Right cardiac atrium (tissue), 5 donors: ENCODE measurements at regions of chr15 and their contacts with region 1.

Region 1: GRCh38 chr15:86915811-86916331 is 836.2 kb downstream of the AGBL1 start:
- DNase-seq: peak in 1 of 3 donors; percentile 15
- ATAC-seq: peak; percentile 69
- H3K4me3 ChIP-seq: no peak overlapping the region
- H3K27ac ChIP-seq: no peak overlapping the region
- H3K4me1 ChIP-seq: peaks cover 5% of the 10 kb centered on the region
- H3K27me3 ChIP-seq: no peaks in the 10 kb centered on the region

Region 2: GRCh38 chr15:86797135-86797534 is 118.7 kb before region 1 on chr15:
- intact Hi-C with region 1: no loop called
- DNase-seq: no peak
- ATAC-seq: no peak
- H3K4me3 ChIP-seq: no peak overlapping the region
- H3K27ac ChIP-seq: no peak overlapping the region
- H3K4me1 ChIP-seq: no peaks in the 10 kb centered on the region
- H3K27me3 ChIP-seq: no peaks in the 10 kb centered on the region

Region 3: GRCh38 chr15:86863226-86863915 is 52.5 kb before region 1 on chr15:
- intact Hi-C with region 1: no loop called
- DNase-seq: no peak
- ATAC-seq: no peak
- H3K4me3 ChIP-seq: no peak overlapping the region
- H3K27ac ChIP-seq: no peak overlapping the region
- H3K4me1 ChIP-seq: no peaks in the 10 kb centered on the region
- H3K27me3 ChIP-seq: no peaks in the 10 kb centered on the region

Region 4: GRCh38 chr15:88246666-88247446 is 1331.0 kb after region 1 on chr15:
- intact Hi-C with region 1: loop called in 2 of 4 experiments (anchors 5 to 10 kb)
- DNase-seq: peak; percentile 78 to 90 (median 87)
- ATAC-seq: peak; percentile 77 to 86
- H3K4me3 ChIP-seq: no peak overlapping the region
- H3K27ac ChIP-seq: no peak overlapping the region
- H3K4me1 ChIP-seq: no peaks in the 10 kb centered on the region
- H3K27me3 ChIP-seq: no peaks in the 10 kb centered on the region

Region 5: GRCh38 chr15:88274553-88275460 is 1358.9 kb after region 1 on chr15:
- intact Hi-C with region 1: loop called in 1 of 4 experiments (anchors 10 kb)
- DNase-seq: peak; percentile 59 to 81 (median 80)
- ATAC-seq: peak; percentile 72 to 83
- H3K4me3 ChIP-seq: no peak overlapping the region
- H3K27ac ChIP-seq: no peak overlapping the region
- H3K4me1 ChIP-seq: no peaks in the 10 kb centered on the region
- H3K27me3 ChIP-seq: no peaks in the 10 kb centered on the region